Activated CD4-positive, alpha-beta memory T cell treated with anti-CD3 and anti-CD28 coated beads, Interleukin-2, amount 10 ng/mL, durations not matched to agents 7 days and 5 days (primary cell): ENCODE measurements at regions of chr3 and their contacts with region 1.

Region 1: GRCh38 chr3:151203051-151203420 is at the start of gene GPR171:
- DNase-seq: peak; percentile 82
- H3K4me3 Mint-ChIP-seq: peak within 1 kb of the TSS; percentile 90
- H3K27ac Mint-ChIP-seq: peak within 1 kb of the TSS; percentile 98
- H3K4me1 Mint-ChIP-seq: peaks cover 60% of the 10 kb centered on the region
- H3K27me3 Mint-ChIP-seq: no peaks in the 10 kb centered on the region
- total RNA-seq, gene GPR171: 204 to 222 TPM

Region 2: GRCh38 chr3:151183265-151183671 is 19.8 kb before region 1 on chr3:
- CTCF ChIA-PET with region 1: interaction called, 5 read pairs
- POLR2A ChIA-PET with region 1: interaction called, 77 read pairs
- DNase-seq: peak; percentile 37
- H3K4me3 Mint-ChIP-seq: peak overlapping the region; percentile 53
- H3K27ac Mint-ChIP-seq: peak overlapping the region; percentile 79
- H3K4me1 Mint-ChIP-seq: peaks cover 49% of the 10 kb centered on the region
- H3K27me3 Mint-ChIP-seq: peaks cover 2% of the 10 kb centered on the region

Region 3: DNA sequence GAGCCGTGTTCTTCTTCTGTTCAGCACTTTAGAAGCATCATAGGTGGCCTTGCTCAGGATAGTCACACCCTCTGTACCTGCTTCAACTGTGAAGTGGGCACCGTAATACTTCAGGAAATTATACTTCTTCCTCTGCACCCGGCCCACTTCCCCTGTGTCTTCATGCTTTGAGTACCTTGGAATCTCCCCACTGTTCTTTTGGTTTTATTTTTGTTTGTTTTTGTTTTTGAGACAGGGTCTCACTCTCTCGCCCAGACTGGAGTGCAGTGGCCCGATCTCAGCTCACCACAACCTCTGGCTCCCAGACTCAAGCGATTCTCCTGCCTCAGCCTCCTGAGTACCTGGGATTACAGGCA is 73.6 kb after region 1 on chr3:
- CTCF ChIA-PET with region 1: interaction called, 4 read pairs
- POLR2A ChIA-PET with region 1: interaction called, 16 read pairs
- DNase-seq: peak; percentile 43
- H3K4me3 Mint-ChIP-seq: peak overlapping the region; percentile 42
- H3K27ac Mint-ChIP-seq: peak overlapping the region; percentile 83
- H3K4me1 Mint-ChIP-seq: peaks cover 51% of the 10 kb centered on the region
- H3K27me3 Mint-ChIP-seq: no peaks in the 10 kb centered on the region